AG04450 (cell line): ENCODE measurements at regions of chr17 and their contacts with region 1.

Region 1: GRCh38 chr17:75271233-75271954 is 363 bp upstream of the MIF4GD start:
- DNase-seq: no peak
- H3K4me3 ChIP-seq: peak overlapping the region; percentile 68
- H3K27ac ChIP-seq: no peak overlapping the region
- H3K27me3 ChIP-seq: no peaks in the 10 kb centered on the region
- CTCF ChIP-seq: peak; percentile 44

Region 2: DNA sequence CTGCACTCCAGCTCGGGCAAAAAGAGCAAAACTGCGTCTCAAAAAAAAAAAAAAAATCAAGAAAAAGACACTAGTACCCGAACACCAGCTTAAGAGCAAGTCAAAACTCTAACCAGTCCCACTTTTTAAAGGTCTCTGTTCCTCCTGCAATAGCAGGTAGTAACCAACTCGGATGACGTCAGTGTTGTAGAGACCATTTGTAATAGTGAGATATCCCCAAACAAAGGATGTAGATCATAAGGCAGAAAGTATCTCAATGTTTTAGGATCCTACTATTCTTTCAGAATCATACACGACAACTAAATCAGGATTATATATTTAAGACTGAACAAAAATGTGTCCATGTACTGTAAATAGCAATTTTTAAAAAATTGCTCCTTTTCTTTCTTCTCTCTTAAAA is 119.5 kb before region 1 on chr17:
- CTCF ChIA-PET with region 1: no interaction called
- POLR2A ChIA-PET with region 1: no interaction called
- DNase-seq: no peak
- H3K4me3 ChIP-seq: peak overlapping the region; percentile 94
- H3K27ac ChIP-seq: no peak overlapping the region
- H3K27me3 ChIP-seq: no peaks in the 10 kb centered on the region
- CTCF ChIP-seq: no peak

Region 3: GRCh38 chr17:75289115-75289831 is 17.9 kb after region 1 on chr17 and contains the start of gene SLC25A19:
- CTCF ChIA-PET with region 1: interaction called, 32 read pairs
- POLR2A ChIA-PET with region 1: interaction called, 24 read pairs
- DNase-seq: peak; percentile 97
- H3K4me3 ChIP-seq: peak within 1 kb of the TSS; percentile 91
- H3K27ac ChIP-seq: peak within 1 kb of the TSS; percentile 89
- H3K27me3 ChIP-seq: no peaks in the 10 kb centered on the region
- CTCF ChIP-seq: no peak
- polyA plus RNA-seq, gene SLC25A19: 3.5 and 4.4 TPM in 2 replicates

Region 4: DNA sequence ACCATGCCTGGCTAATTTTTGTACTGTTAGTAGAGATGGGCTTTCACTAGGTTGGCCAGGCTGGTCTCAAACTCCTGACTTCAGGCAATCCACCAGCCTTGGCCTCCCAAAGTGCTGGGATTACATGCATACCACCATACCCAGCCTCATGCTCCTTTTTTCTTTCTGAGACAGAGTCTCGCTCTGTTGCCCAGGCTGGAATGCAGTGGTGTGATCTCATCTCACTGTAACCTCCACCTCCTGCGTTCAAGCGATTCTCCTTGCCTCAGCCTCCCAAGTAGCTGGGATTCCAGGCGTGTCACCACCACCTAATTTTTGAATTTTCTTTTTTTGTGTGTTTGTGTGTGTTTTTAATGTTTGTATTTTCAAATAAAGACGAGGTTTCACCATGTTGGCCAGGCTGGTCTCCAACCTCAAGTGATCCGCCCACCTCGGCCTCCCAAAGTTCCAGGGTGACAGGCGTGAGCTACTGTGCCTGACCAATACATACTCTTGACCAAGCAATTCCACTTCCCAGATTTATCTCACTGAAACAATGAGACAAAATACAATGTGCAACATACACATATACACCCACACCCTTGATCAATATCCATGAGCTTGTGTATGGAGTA is 129.0 kb after region 1 on chr17:
- CTCF ChIA-PET with region 1: interaction called, 15 read pairs
- POLR2A ChIA-PET with region 1: interaction called, 6 read pairs
- DNase-seq: no peak
- H3K4me3 ChIP-seq: no peak overlapping the region
- H3K27ac ChIP-seq: no peak overlapping the region
- H3K27me3 ChIP-seq: no peaks in the 10 kb centered on the region
- CTCF ChIP-seq: no peak

Region 5: GRCh38 chr17:75412455-75413317 is 141.3 kb after region 1 on chr17:
- CTCF ChIA-PET with region 1: interaction called, 31 read pairs
- POLR2A ChIA-PET with region 1: interaction called, 3 read pairs
- DNase-seq: peak; percentile 46
- H3K4me3 ChIP-seq: no peak overlapping the region
- H3K27ac ChIP-seq: no peak overlapping the region
- H3K27me3 ChIP-seq: peaks cover 13% of the 10 kb centered on the region
- CTCF ChIP-seq: peak; percentile 87